Left lung (tissue), 14 donors: ENCODE measurements at regions of chrX and their contacts with region 1.

Region 1: DNA sequence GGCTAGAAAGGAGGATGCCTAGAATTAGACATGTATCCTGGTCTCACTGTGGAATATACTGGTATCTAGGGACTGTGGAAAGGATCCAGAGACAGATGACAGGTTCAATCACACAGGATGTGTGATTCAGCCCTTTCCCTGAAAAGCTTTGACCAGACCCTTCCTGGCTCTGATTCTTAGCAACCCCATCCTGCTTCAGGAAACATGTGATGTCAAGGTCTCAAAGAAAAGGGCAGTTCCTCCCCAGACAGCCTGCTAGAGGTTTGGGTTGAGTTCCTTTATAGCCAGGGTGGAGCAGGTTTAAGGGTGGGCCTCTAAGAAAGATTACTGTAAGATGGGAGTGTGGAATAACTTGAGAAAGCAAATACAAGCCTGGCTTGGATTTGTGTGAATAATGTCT is 3.0 kb downstream of the BMP15 start:
- DNase-seq: no peak
- ATAC-seq: no peak
- H3K4me3 ChIP-seq: no peak overlapping the region
- H3K27ac ChIP-seq: no peak overlapping the region
- H3K4me1 ChIP-seq: no peaks in the 10 kb centered on the region
- H3K27me3 ChIP-seq: no peaks in the 10 kb centered on the region
- CTCF ChIP-seq: no peak

Region 2: DNA sequence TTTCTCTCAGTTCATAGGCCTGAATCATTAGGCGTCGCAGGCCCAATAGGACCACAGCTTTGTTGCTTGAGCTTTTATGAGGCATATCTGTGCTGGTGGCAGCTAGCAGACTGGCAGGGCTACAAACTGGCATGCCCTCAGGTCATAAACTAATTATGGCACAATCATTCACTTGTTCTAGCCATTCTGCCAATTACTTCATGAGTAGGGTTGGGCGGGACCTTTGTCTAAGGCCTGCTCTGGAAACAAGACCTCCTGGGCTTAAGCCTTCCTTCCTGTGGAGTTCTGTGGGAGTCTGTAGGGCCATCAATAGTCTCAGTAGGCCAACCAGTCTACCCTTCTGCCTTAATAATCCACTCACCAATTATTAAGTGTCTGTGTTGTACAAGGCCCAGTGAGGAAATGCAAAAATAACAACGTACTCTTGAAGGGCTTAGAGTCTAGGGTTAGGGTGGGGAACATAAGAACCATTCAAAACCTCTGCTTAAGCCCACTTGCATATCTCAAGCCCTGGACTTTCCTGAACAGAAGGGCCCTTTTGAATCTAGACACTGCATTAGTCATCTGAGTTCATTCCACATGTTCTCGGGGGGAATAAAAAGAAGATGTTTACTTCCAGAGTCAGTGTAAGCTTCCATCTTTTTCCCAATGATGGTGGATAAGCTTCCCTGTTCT is 144.0 kb before region 1 on chrX:
- intact Hi-C with region 1: loop called in 1 of 2 experiments (anchors 10 kb)
- DNase-seq: peak in 1 of 4 donors; percentile 44
- ATAC-seq: peak; percentile 77
- H3K4me3 ChIP-seq: no peak overlapping the region
- H3K27ac ChIP-seq: peak overlapping the region in 1 of 2 donors; percentile 13
- H3K4me1 ChIP-seq: no peaks in the 10 kb centered on the region
- H3K27me3 ChIP-seq: no peaks in the 10 kb centered on the region
- CTCF ChIP-seq: no peak